Aorta (tissue), 5 donors: ENCODE measurements at regions of chr4 and their contacts with region 1.

Region 1: DNA sequence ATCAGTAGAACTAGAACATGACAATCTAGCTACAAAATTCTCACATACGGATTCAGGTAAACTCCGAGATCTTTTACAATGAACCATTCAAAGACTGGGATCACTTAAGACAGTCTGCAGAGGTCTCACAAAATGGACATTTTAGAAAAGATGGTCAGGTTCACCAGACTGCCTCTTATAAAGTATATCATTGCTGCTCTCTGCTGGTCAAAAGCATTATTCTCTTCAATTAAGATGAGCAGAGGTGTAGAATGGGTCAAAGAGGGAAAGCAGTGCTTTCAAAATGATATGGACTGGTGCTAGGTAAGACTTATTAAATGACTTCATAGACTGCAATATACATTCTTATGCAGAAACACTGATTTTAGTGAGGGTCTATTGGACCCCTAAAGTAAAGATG is 434.7 kb downstream of the PACRGL start:
- DNase-seq: no peak
- ATAC-seq: no peak
- H3K4me3 ChIP-seq: no peak overlapping the region
- H3K27ac ChIP-seq: no peak overlapping the region
- H3K4me1 ChIP-seq: no peaks in the 10 kb centered on the region
- H3K27me3 ChIP-seq: no peaks in the 10 kb centered on the region

Region 2: GRCh38 chr4:20773144-20773997 is 361.6 kb before region 1 on chr4:
- intact Hi-C with region 1: loop called in 1 of 2 experiments (anchors 10 kb)
- DNase-seq: no peak
- ATAC-seq: peak; percentile 70
- H3K4me3 ChIP-seq: no peak overlapping the region
- H3K27ac ChIP-seq: no peak overlapping the region
- H3K4me1 ChIP-seq: no peaks in the 10 kb centered on the region
- H3K27me3 ChIP-seq: no peaks in the 10 kb centered on the region

Region 3: DNA sequence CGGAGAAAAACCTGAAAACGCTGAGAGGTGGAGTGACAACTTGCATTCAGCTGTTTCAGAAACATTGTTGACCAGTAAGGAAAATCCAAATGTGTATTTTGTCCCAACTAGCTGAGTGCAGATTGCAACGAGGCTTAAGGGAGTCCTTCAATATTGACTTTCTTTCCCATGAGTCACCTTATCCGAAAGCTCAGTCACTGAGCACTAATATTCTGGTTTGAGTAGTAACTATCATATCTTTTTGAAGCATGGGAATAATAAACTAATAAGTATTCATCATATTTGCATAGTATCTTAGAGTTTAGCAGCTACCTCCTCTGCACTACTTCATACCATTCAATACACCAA is 169.5 kb after region 1 on chr4:
- intact Hi-C with region 1: no loop called
- DNase-seq: no peak
- ATAC-seq: no peak
- H3K4me3 ChIP-seq: no peak overlapping the region
- H3K27ac ChIP-seq: no peak overlapping the region
- H3K4me1 ChIP-seq: no peaks in the 10 kb centered on the region
- H3K27me3 ChIP-seq: no peaks in the 10 kb centered on the region